ENCODE measurements at regions of chr16 and their contacts with region 1.

Region 1: DNA sequence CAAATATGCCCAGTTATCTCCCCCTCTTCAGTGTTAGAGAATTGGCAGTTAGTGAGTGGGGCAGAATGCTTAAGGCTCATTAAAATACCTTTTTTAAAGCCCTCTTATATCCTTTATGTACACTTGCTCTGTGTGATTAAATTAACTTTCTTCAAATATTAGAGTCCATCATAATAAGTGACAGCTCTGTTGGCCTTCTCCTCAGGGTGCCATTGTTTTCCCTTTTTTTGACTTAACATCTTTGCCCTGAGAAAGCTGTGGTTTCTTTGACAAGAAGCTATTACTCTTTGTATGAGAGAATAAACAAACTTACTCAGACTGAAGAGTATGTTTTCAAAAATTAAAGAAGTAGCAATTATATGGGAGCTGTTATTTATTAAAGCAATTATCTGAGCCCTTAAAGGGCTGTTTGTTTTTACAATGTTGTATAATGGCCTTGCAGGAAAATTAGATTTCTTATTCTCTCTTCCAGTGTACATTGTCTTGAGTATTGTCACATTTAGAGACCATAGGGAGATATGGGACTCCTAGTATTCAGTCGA is 13.4 kb downstream of the RBBP6 start:
- DNase-seq: no peak
- ATAC-seq: no peak
- H3K4me3 ChIP-seq: no peak overlapping the region
- H3K4me3 Mint-ChIP-seq: peak overlapping the region in 1 of 10 donors; percentile 26
- H3K27ac ChIP-seq: no peak overlapping the region
- H3K27ac Mint-ChIP-seq: peak overlapping the region in 3 of 9 donors; percentile 43 to 53 (median 45)
- H3K4me1 ChIP-seq: peaks cover 0 to 10% of the 10 kb centered on the region in 2 donors
- H3K4me1 Mint-ChIP-seq: peaks cover 21 to 59% (median 44%) of the 10 kb centered on the region in 7 donors
- H3K27me3 ChIP-seq: no peaks in the 10 kb centered on the region
- H3K27me3 Mint-ChIP-seq: no peaks in the 10 kb centered on the region

Region 2: GRCh38 chr16:24789881-24790280 is 237.1 kb after region 1 on chr16:
- CTCF ChIA-PET with region 1: no interaction called
- POLR2A ChIA-PET with region 1: no interaction called
- intact Hi-C with region 1: loop called in 1 of 2 experiments (anchors 10 kb)
- DNase-seq: no peak
- ATAC-seq: no peak
- H3K4me3 ChIP-seq: no peak overlapping the region
- H3K4me3 Mint-ChIP-seq: no peak overlapping the region
- H3K27ac ChIP-seq: no peak overlapping the region
- H3K27ac Mint-ChIP-seq: peak overlapping the region in 2 of 9 donors; percentile 63 to 72
- H3K4me1 ChIP-seq: no peaks in the 10 kb centered on the region
- H3K4me1 Mint-ChIP-seq: peaks cover 0 to 10% (median 8%) of the 10 kb centered on the region in 7 donors
- H3K27me3 ChIP-seq: no peaks in the 10 kb centered on the region
- H3K27me3 Mint-ChIP-seq: no peaks in the 10 kb centered on the region